Activated CD4-positive, alpha-beta memory T cell treated with anti-CD3 and anti-CD28 coated beads for 36 hours (primary cell): ENCODE measurements at regions of chr12 and their contacts with region 1.

Region 1: GRCh38 chr12:3202734-3203446 is 125.7 kb downstream of the TSPAN9 start:
- DNase-seq: peak; percentile 74
- H3K4me3 Mint-ChIP-seq: no peak overlapping the region
- H3K27ac Mint-ChIP-seq: no peak overlapping the region
- H3K4me1 Mint-ChIP-seq: peaks cover 9% of the 10 kb centered on the region
- H3K27me3 Mint-ChIP-seq: peaks cover 34% of the 10 kb centered on the region

Region 2: GRCh38 chr12:3135522-3136461 is 67.1 kb before region 1 on chr12:
- CTCF ChIA-PET with region 1: interaction called, 16 read pairs
- POLR2A ChIA-PET with region 1: no interaction called
- intact Hi-C with region 1: loop called (anchors 1 kb)
- DNase-seq: peak; percentile 44
- H3K4me3 Mint-ChIP-seq: no peak overlapping the region
- H3K27ac Mint-ChIP-seq: no peak overlapping the region
- H3K4me1 Mint-ChIP-seq: no peaks in the 10 kb centered on the region
- H3K27me3 Mint-ChIP-seq: peaks cover 34% of the 10 kb centered on the region